ENCODE measurements at regions of chr14 and their contacts with region 1.

Region 1: GRCh38 chr14:59126710-59127432 is 61.6 kb upstream of the DAAM1 start:
- DNase-seq: peak in 4 of 5 donors; percentile 55 to 62 (median 61)
- H3K4me3 ChIP-seq: no peak overlapping the region
- H3K4me3 Mint-ChIP-seq: no peak overlapping the region
- H3K27ac ChIP-seq: no peak overlapping the region
- H3K27ac Mint-ChIP-seq: no peak overlapping the region
- H3K4me1 ChIP-seq: no peaks in the 10 kb centered on the region
- H3K4me1 Mint-ChIP-seq: peaks cover 0 to 3% (median 0%) of the 10 kb centered on the region in 4 donors
- H3K27me3 ChIP-seq: no peaks in the 10 kb centered on the region
- H3K27me3 Mint-ChIP-seq: peaks cover 13 to 19% of the 10 kb centered on the region in 2 donors

Region 2: GRCh38 chr14:59343585-59343984 is 216.7 kb after region 1 on chr14:
- CTCF ChIA-PET with region 1: no interaction called
- POLR2A ChIA-PET with region 1: no interaction called
- intact Hi-C with region 1: loop called (anchors 10 kb)
- DNase-seq: no peak
- H3K4me3 ChIP-seq: no peak overlapping the region
- H3K4me3 Mint-ChIP-seq: no peak overlapping the region
- H3K27ac ChIP-seq: no peak overlapping the region
- H3K27ac Mint-ChIP-seq: no peak overlapping the region
- H3K4me1 ChIP-seq: no peaks in the 10 kb centered on the region
- H3K4me1 Mint-ChIP-seq: no peaks in the 10 kb centered on the region
- H3K27me3 ChIP-seq: no peaks in the 10 kb centered on the region
- H3K27me3 Mint-ChIP-seq: no peaks in the 10 kb centered on the region

Region 3: GRCh38 chr14:59438195-59438647 is 311.4 kb after region 1 on chr14:
- CTCF ChIA-PET with region 1: interaction called, 78 read pairs
- POLR2A ChIA-PET with region 1: no interaction called
- intact Hi-C with region 1: no loop called
- DNase-seq: no peak
- H3K4me3 ChIP-seq: no peak overlapping the region
- H3K4me3 Mint-ChIP-seq: no peak overlapping the region
- H3K27ac ChIP-seq: no peak overlapping the region
- H3K27ac Mint-ChIP-seq: no peak overlapping the region
- H3K4me1 ChIP-seq: no peaks in the 10 kb centered on the region
- H3K4me1 Mint-ChIP-seq: no peaks in the 10 kb centered on the region
- H3K27me3 ChIP-seq: no peaks in the 10 kb centered on the region
- H3K27me3 Mint-ChIP-seq: no peaks in the 10 kb centered on the region

Region 4: DNA sequence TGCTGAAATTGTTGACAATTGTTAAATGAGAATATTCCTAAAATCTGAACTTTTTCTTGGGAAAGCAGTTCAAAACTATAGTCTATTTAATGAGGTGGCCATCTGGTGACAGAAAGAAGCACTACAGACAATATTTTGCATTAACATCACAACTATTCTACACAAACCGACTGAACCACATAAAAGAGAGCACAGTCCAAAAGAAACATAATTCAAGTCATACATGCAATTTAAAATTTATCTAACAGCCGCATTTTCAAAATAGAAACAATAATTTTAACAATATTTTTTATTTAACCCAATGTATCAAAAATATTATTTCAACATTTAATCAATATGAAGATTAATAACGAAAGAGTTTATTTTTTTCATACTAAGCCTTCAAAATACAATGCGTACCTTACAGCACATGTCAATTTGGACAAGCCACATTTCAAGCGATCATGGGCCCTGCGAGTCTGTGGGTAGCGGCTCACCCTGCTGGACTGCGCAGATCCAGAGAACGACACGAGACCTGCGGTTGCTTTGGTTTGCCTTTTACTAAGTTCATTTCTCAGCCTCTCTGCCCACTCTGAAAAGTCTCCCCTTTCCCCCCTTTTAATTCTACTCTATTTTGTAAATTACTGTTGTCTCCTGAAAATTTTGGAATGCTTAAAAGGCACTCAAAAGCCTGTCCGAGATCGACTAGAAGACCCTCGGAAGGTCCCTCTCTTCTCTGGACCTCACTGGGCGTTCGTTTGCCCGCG is 792.1 kb after region 1 on chr14:
- CTCF ChIA-PET with region 1: no interaction called
- POLR2A ChIA-PET with region 1: no interaction called
- intact Hi-C with region 1: loop called (anchors 2 kb)
- DNase-seq: peak in 3 of 5 donors; percentile 1 to 26 (median 7)
- H3K4me3 ChIP-seq: peak overlapping the region in 1 of 2 donors; percentile 31
- H3K4me3 Mint-ChIP-seq: peak overlapping the region; percentile 68 to 81 (median 78)
- H3K27ac ChIP-seq: no peak overlapping the region
- H3K27ac Mint-ChIP-seq: no peak overlapping the region
- H3K4me1 ChIP-seq: peaks cover 9% of the 10 kb centered on the region
- H3K4me1 Mint-ChIP-seq: peaks cover 5 to 15% (median 7%) of the 10 kb centered on the region in 4 donors
- H3K27me3 ChIP-seq: peaks cover 16% of the 10 kb centered on the region
- H3K27me3 Mint-ChIP-seq: peaks cover 31 to 41% of the 10 kb centered on the region in 2 donors

Measured in CD4-positive, alpha-beta memory T cell (primary cell).